IMR-90 (cell line): ENCODE measurements at regions of chr11 and their contacts with region 1.

Region 1: GRCh38 chr11:61332797-61333549 is at the starts of genes DDB1 and TKFC:
- DNase-seq: peak; percentile 87
- ATAC-seq: peak; percentile 91
- H3K4me3 ChIP-seq: peak within 1 kb of the TSS; percentile 92
- H3K27ac ChIP-seq: peak within 1 kb of the TSS; percentile 93
- H3K4me1 ChIP-seq: peaks cover 17% of the 10 kb centered on the region
- H3K27me3 ChIP-seq: no peaks in the 10 kb centered on the region
- CTCF ChIP-seq: no peak
- POLR2A ChIP-seq: peak; percentile 94
- RAD21 ChIP-seq: no peak
- total RNA-seq, gene DDB1: 372 and 412 TPM in 2 replicates
- total RNA-seq, gene TKFC: 8.9 and 10.4 TPM in 2 replicates

Region 2: GRCh38 chr11:61201476-61201875 is 131.5 kb before region 1 on chr11:
- CTCF ChIA-PET with region 1: no interaction called
- POLR2A ChIA-PET with region 1: no interaction called
- dilution Hi-C with region 1: no loop called
- in situ Hi-C with region 1: no loop called
- intact Hi-C with region 1: no loop called
- DNase-seq: no peak
- ATAC-seq: no peak
- H3K4me3 ChIP-seq: no peak overlapping the region
- H3K27ac ChIP-seq: no peak overlapping the region
- H3K4me1 ChIP-seq: no peaks in the 10 kb centered on the region
- H3K27me3 ChIP-seq: peaks cover 19% of the 10 kb centered on the region; the same call in 1 of the 2 replicates
- CTCF ChIP-seq: no peak
- POLR2A ChIP-seq: no peak
- RAD21 ChIP-seq: no peak

Region 3: DNA sequence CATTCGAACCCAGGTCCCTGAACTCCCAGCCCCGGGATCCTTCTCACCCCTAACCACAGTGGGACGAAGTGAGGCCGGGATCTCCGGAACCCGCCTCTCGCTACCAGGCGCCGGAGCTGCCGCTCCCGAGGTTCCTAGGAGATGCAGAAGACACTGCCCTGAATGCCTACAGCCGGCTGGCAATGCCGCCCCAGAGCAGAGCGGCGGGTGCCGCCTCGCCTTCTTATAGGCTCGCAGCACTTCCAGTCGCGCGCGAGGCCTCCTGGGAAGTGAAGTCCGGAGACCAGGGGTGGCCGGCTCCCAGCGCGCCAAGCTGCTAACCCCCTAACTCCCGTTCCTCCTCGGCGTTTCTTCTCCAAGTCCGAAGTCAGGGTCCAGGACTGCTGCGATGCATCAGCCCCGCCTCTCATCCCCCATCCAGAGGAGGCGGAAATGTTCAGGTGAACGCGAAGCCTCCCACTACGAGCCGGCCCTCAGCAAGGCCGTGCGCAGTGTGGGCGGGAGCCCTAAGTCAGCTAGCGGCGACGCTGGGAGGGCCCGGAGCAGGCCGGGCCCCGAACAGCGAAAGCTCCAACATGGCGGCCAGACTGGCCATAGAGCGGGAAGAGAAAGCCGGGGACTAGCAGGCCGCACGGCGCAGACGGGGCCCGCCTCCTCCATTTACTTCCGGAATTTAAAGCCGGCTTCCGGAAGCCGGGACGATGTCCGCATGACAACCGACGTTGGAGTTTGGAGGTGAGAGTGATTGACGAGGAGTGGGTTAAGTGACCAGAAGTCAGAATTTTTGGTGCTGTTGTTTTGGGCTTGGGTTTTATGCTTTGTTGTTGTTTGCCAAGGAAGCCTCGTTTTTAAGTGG is 28.9 kb after region 1 on chr11 and contains the starts of genes CYB561A3 and TMEM138:
- CTCF ChIA-PET with region 1: interaction called, 17 read pairs
- POLR2A ChIA-PET with region 1: interaction called, 4 read pairs
- dilution Hi-C with region 1: no loop called
- in situ Hi-C with region 1: no loop called
- intact Hi-C with region 1: no loop called
- DNase-seq: peak; percentile 92
- ATAC-seq: peak; percentile 95
- H3K4me3 ChIP-seq: peak within 1 kb of the TSS; percentile 88
- H3K27ac ChIP-seq: peak within 1 kb of the TSS; percentile 99
- H3K4me1 ChIP-seq: peaks cover 5% of the 10 kb centered on the region
- H3K27me3 ChIP-seq: no peaks in the 10 kb centered on the region
- CTCF ChIP-seq: no peak
- POLR2A ChIP-seq: peak; percentile 88
- RAD21 ChIP-seq: no peak
- total RNA-seq, gene CYB561A3: 13.6 and 15.3 TPM in 2 replicates
- total RNA-seq, gene TMEM138: 16.7 and 16.8 TPM in 2 replicates

Region 4: GRCh38 chr11:61384271-61385242 is 51.6 kb after region 1 on chr11:
- CTCF ChIA-PET with region 1: interaction called, 72 read pairs
- POLR2A ChIA-PET with region 1: no interaction called
- dilution Hi-C with region 1: no loop called
- in situ Hi-C with region 1: loop called (anchors 5 kb)
- intact Hi-C with region 1: loop called (anchors 1 kb)
- DNase-seq: peak; percentile 42
- ATAC-seq: peak; percentile 46; the same call in 1 of the 2 replicates
- H3K4me3 ChIP-seq: no peak overlapping the region
- H3K27ac ChIP-seq: no peak overlapping the region
- H3K4me1 ChIP-seq: no peaks in the 10 kb centered on the region
- H3K27me3 ChIP-seq: no peaks in the 10 kb centered on the region
- CTCF ChIP-seq: peak; percentile 39
- POLR2A ChIP-seq: no peak
- RAD21 ChIP-seq: peak; percentile 55

Region 5: GRCh38 chr11:61392981-61393595 is 60.1 kb after region 1 on chr11:
- CTCF ChIA-PET with region 1: interaction called, 10 read pairs
- POLR2A ChIA-PET with region 1: no interaction called
- dilution Hi-C with region 1: no loop called
- in situ Hi-C with region 1: loop called (anchors 5 kb)
- intact Hi-C with region 1: no loop called
- DNase-seq: peak; percentile 34
- ATAC-seq: peak; percentile 42
- H3K4me3 ChIP-seq: peak overlapping the region; percentile 81
- H3K27ac ChIP-seq: peak overlapping the region; percentile 78
- H3K4me1 ChIP-seq: peaks cover 3% of the 10 kb centered on the region; the same call in 1 of the 2 replicates
- H3K27me3 ChIP-seq: no peaks in the 10 kb centered on the region
- CTCF ChIP-seq: peak; percentile 39
- POLR2A ChIP-seq: no peak
- RAD21 ChIP-seq: no peak

Region 6: DNA sequence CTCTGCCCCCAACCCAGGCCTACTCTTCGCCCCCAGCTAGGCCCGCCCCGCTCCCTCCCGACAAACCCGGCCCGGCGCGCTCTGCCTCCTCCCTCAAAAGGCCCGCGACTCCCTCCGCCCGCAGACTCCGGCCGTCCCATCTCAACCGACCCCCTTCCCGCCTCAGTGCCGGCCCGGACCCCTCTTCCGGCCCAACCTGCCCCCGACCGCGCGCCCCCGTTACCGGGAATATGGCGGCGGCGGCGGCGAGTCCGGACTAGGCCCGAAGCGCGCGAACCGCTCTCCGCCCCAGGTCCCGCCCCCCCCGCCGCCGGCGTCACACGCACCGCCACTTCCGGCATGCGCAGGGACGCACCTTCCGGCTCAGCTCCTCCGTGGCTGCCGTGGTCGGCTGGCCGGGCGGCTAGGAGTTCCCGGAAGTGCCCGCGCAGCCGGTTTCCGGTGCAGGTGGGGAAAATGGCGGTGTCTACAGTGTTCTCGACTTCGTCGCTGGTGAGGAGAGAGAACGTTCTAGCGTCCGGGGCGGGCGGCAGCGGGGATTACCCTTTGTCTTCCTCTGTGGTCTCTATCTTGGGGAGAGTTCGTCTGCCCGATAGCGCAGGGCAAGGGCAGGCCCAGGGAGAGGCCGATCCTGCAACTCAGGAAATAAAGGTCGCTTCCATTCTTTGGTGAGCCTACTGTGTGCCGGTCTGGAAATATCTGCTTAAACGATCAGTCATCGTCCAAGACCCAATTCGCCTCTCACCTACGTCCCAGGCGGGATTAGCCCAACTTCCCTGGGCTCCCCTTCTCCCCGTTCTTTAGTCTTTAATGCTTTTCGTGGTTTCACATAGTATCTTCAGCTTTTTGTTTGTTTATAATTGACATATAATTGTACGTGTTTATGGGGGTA is 97.0 kb after region 1 on chr11 and contains the starts of genes CPSF7 and SDHAF2:
- CTCF ChIA-PET with region 1: no interaction called
- POLR2A ChIA-PET with region 1: no interaction called
- dilution Hi-C with region 1: no loop called
- in situ Hi-C with region 1: no loop called
- intact Hi-C with region 1: loop called (anchors 5 kb)
- DNase-seq: peak; percentile 92
- ATAC-seq: peak; percentile 95
- H3K4me3 ChIP-seq: peak within 1 kb of the TSS; percentile 98
- H3K27ac ChIP-seq: peak within 1 kb of the TSS; percentile 94
- H3K4me1 ChIP-seq: peaks cover 2% of the 10 kb centered on the region; the same call in 1 of the 2 replicates
- H3K27me3 ChIP-seq: no peaks in the 10 kb centered on the region
- CTCF ChIP-seq: no peak
- POLR2A ChIP-seq: peak; percentile 85
- RAD21 ChIP-seq: no peak
- total RNA-seq, gene CPSF7: 9.5 and 10.3 TPM in 2 replicates
- total RNA-seq, gene SDHAF2: 34.7 and 50.4 TPM in 2 replicates

Region 7: DNA sequence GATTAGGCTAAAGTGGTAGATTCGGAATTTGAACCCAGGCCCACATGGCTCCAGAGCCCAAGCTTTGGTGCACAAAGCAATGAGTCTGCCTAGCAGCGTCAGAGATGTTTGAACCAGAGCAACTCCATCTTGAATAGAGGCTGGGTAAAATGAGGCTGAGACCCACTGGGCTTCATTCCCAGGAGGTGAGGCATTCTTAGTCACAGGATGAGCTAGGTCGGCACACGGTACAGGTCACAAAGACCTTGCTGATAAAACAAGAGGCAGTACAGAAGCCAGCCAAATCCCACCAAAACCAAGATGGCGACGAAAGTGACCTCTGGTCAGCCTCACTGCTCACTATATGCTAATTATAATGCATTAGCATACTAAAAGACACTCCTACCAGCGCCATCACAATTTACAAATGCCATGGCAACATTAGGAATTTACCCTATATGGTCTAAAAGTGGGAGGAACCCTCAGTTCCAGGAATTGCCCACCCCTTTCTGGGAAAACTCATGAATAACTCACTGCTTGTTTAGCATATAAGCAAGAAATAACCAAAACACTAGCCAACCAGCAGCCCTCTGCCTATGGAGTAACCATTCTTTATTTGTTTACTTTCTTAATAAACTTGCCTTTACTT is 307.0 kb after region 1 on chr11:
- CTCF ChIA-PET with region 1: no interaction called
- POLR2A ChIA-PET with region 1: no interaction called
- dilution Hi-C with region 1: no loop called
- in situ Hi-C with region 1: no loop called
- intact Hi-C with region 1: loop called (anchors 10 kb)
- DNase-seq: peak; percentile 31
- ATAC-seq: peak; percentile 59
- H3K4me3 ChIP-seq: no peak overlapping the region
- H3K27ac ChIP-seq: peak overlapping the region; percentile 59; the same call in 1 of the 2 replicates
- H3K4me1 ChIP-seq: peaks cover 7% of the 10 kb centered on the region; the same call in 1 of the 2 replicates
- H3K27me3 ChIP-seq: peaks cover 16% of the 10 kb centered on the region
- CTCF ChIP-seq: no peak
- POLR2A ChIP-seq: no peak
- RAD21 ChIP-seq: no peak

Region 8: DNA sequence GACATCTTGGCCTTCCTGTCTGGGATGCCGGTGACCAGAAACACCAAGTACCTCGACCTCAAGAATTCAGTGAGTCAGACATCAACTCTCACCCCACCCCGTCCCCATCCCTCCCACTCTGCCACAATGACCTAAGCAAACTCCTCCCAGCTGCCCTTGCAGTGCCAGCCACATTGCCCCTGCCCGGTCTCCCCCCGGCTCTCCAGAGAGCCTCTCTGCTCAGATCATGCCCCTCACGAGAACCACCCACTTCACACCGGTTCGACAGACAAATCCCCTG is 395.9 kb after region 1 on chr11:
- CTCF ChIA-PET with region 1: no interaction called
- POLR2A ChIA-PET with region 1: no interaction called
- dilution Hi-C with region 1: no loop called
- in situ Hi-C with region 1: no loop called
- intact Hi-C with region 1: no loop called
- DNase-seq: peak; percentile 50
- ATAC-seq: peak; percentile 33; the same call in 1 of the 2 replicates
- H3K4me3 ChIP-seq: no peak overlapping the region
- H3K27ac ChIP-seq: no peak overlapping the region
- H3K4me1 ChIP-seq: peaks cover 3% of the 10 kb centered on the region; the same call in 1 of the 2 replicates
- H3K27me3 ChIP-seq: no peaks in the 10 kb centered on the region
- CTCF ChIP-seq: no peak
- POLR2A ChIP-seq: no peak
- RAD21 ChIP-seq: no peak